ENCODE measurements at regions of chr4 and their contacts with region 1.

Region 1: GRCh38 chr4:122930862-122931261 is 8.5 kb upstream of the NUDT6 start:
- DNase-seq: no peak
- ATAC-seq: peak in 1 of 4 donors; percentile 34
- H3K4me3 ChIP-seq: no peak overlapping the region
- H3K27ac ChIP-seq: no peak overlapping the region
- H3K4me1 ChIP-seq: no peaks in the 10 kb centered on the region
- H3K27me3 ChIP-seq: no peaks in the 10 kb centered on the region
- CTCF ChIP-seq: peak in 3 of 4 donors; percentile 21 to 40 (median 34)

Region 2: GRCh38 chr4:122758033-122758432 is 172.8 kb before region 1 on chr4:
- intact Hi-C with region 1: loop called in 1 of 3 experiments (anchors 10 kb)
- DNase-seq: no peak
- ATAC-seq: peak in 3 of 4 donors; percentile 63 to 70 (median 65)
- H3K4me3 ChIP-seq: no peak overlapping the region
- H3K27ac ChIP-seq: no peak overlapping the region
- H3K4me1 ChIP-seq: no peaks in the 10 kb centered on the region
- H3K27me3 ChIP-seq: no peaks in the 10 kb centered on the region
- CTCF ChIP-seq: peak; percentile 52 to 62 (median 58)

Measured in pancreas (tissue), 10 donors.